MCF 10A (cell line): ENCODE measurements at regions of chr4 and their contacts with region 1.

Region 1: GRCh38 chr4:78775303-78776030 is 683 bp upstream of the BMP2K start:
- DNase-seq: peak; percentile 80
- H3K4me3 Mint-ChIP-seq: peak overlapping the region; percentile 94
- H3K27ac Mint-ChIP-seq: peak overlapping the region; percentile 96
- H3K4me1 Mint-ChIP-seq: no peaks in the 10 kb centered on the region
- H3K27me3 Mint-ChIP-seq: no peaks in the 10 kb centered on the region
- CTCF ChIP-seq: no peak

Region 2: DNA sequence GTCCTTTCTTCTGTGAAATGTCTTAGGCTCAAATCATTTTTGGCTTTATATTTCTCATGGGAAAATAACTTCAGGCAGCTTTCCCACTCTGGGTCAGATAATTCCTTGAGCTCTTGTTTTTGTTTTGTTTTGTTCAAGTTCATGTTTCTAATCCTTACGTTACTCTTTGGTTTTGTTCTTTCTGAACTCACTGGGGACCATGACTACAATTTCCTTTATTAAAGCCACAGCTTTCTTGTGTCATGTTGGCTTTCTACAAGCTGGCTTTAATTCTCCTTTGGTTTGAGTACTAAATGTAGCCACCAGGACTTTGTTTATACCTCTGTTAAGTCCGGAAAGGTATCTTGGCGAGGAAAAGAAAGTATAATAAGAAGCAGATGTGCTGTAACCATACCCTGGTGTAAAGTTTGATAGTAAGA is 254.7 kb before region 1 on chr4:
- CTCF ChIA-PET with region 1: no interaction called
- POLR2A ChIA-PET with region 1: no interaction called
- intact Hi-C with region 1: no loop called
- DNase-seq: no peak
- H3K4me3 Mint-ChIP-seq: no peak overlapping the region
- H3K27ac Mint-ChIP-seq: no peak overlapping the region
- H3K4me1 Mint-ChIP-seq: no peaks in the 10 kb centered on the region
- H3K27me3 Mint-ChIP-seq: no peaks in the 10 kb centered on the region
- CTCF ChIP-seq: no peak

Region 3: GRCh38 chr4:78551479-78552351 is 223.8 kb before region 1 on chr4 and contains the start of gene ANXA3:
- CTCF ChIA-PET with region 1: no interaction called
- POLR2A ChIA-PET with region 1: no interaction called
- intact Hi-C with region 1: loop called (anchors 5 kb)
- DNase-seq: peak; percentile 53
- H3K4me3 Mint-ChIP-seq: peak within 1 kb of the TSS; percentile 93
- H3K27ac Mint-ChIP-seq: peak within 1 kb of the TSS; percentile 96
- H3K4me1 Mint-ChIP-seq: peaks cover 23% of the 10 kb centered on the region
- H3K27me3 Mint-ChIP-seq: no peaks in the 10 kb centered on the region
- CTCF ChIP-seq: no peak
- total RNA-seq, gene ANXA3: 260 and 272 TPM in 2 replicates

Region 4: GRCh38 chr4:78650091-78651024 is 125.1 kb before region 1 on chr4:
- CTCF ChIA-PET with region 1: interaction called, 4 read pairs
- POLR2A ChIA-PET with region 1: interaction called, 87 read pairs
- intact Hi-C with region 1: loop called (anchors 1 kb)
- DNase-seq: peak; percentile 82
- H3K4me3 Mint-ChIP-seq: no peak overlapping the region
- H3K27ac Mint-ChIP-seq: peak overlapping the region; percentile 26
- H3K4me1 Mint-ChIP-seq: peaks cover 38% of the 10 kb centered on the region
- H3K27me3 Mint-ChIP-seq: no peaks in the 10 kb centered on the region
- CTCF ChIP-seq: no peak

Region 5: GRCh38 chr4:78809928-78810835 is 34.7 kb after region 1 on chr4:
- CTCF ChIA-PET with region 1: interaction called, 4 read pairs
- POLR2A ChIA-PET with region 1: interaction called, 11 read pairs
- intact Hi-C with region 1: no loop called
- DNase-seq: no peak
- H3K4me3 Mint-ChIP-seq: no peak overlapping the region
- H3K27ac Mint-ChIP-seq: no peak overlapping the region
- H3K4me1 Mint-ChIP-seq: no peaks in the 10 kb centered on the region
- H3K27me3 Mint-ChIP-seq: no peaks in the 10 kb centered on the region
- CTCF ChIP-seq: no peak

Region 6: GRCh38 chr4:78864405-78865024 is 89.0 kb after region 1 on chr4:
- CTCF ChIA-PET with region 1: interaction called, 3 read pairs
- POLR2A ChIA-PET with region 1: interaction called, 4 read pairs
- intact Hi-C with region 1: loop called (anchors 1 kb)
- DNase-seq: peak; percentile 78
- H3K4me3 Mint-ChIP-seq: no peak overlapping the region
- H3K27ac Mint-ChIP-seq: no peak overlapping the region
- H3K4me1 Mint-ChIP-seq: peaks cover 6% of the 10 kb centered on the region
- H3K27me3 Mint-ChIP-seq: no peaks in the 10 kb centered on the region
- CTCF ChIP-seq: peak; percentile 61

Region 7: DNA sequence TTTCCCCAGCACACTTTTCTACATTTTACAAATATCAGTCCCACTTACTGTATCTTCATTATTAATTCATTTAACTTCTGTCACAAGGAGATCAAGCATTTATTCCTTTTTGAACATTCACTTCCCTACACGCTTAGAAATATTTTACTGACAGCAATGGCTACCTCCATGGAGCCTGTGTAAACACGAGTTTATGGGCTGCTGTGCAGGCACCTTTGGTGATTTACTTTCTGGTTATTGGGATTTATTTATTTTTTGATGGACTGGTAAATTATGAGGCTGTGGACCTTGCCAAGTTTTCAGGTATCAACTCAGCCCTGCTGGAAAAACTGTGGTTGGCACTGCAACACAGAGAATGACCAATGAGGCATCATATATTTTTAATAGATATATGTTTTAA is 209.1 kb after region 1 on chr4:
- CTCF ChIA-PET with region 1: no interaction called
- POLR2A ChIA-PET with region 1: no interaction called
- intact Hi-C with region 1: no loop called
- DNase-seq: no peak
- H3K4me3 Mint-ChIP-seq: no peak overlapping the region
- H3K27ac Mint-ChIP-seq: no peak overlapping the region
- H3K4me1 Mint-ChIP-seq: no peaks in the 10 kb centered on the region
- H3K27me3 Mint-ChIP-seq: peaks cover 13% of the 10 kb centered on the region
- CTCF ChIP-seq: no peak